ENCODE measurements at regions of chr4 and their contacts with region 1.

Region 1: GRCh38 chr4:41990365-41991111 is at the start of gene SLC30A9:
- DNase-seq: peak; percentile 95
- ATAC-seq: peak; percentile 97
- H3K4me3 Mint-ChIP-seq: peak within 1 kb of the TSS; percentile 93
- H3K27ac Mint-ChIP-seq: peak within 1 kb of the TSS; percentile 97
- H3K4me1 Mint-ChIP-seq: peaks cover 25% of the 10 kb centered on the region
- H3K27me3 Mint-ChIP-seq: no peaks in the 10 kb centered on the region
- total RNA-seq, gene SLC30A9: 55.8 to 59.6 TPM

Region 2: DNA sequence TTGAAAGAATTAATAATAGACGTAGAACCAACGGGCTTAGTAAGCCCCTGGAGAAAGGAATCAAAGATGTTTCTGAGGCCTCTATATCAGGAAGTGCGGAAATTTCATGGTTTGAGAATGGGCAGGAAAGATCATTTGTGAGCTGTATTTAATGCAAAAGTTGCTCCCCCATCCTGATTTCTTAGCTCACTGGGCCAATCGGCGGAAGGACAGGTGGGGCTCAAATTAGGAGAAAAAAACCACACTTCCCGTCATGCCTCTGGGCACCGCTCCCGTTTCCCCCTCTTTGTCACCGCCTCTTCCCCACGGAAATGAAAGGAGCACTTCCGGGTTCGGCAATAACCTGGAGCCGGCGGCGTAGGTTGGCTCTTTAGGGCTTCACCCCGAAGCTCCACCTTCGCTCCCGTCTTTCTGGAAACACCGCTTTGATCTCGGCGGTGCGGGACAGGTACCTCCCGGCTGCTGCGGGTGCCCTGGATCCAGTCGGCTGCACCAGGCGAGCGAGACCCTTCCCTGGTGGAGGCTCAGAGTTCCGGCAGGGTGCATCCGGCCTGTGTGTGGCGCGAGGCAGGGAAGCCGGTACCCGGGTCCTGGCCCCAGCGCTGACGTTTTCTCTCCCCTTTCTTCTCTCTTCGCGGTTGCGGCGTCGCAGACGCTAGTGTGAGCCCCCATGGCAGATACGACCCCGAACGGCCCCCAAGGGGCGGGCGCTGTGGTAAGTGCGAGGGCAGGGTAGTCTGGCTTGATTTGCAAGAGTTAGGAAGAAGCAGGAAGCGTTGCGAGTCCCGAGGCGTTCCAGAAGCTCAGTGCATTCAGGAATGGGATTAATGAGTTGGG is 55.5 kb before region 1 on chr4 and contains the start of gene TMEM33:
- CTCF ChIA-PET with region 1: no interaction called
- POLR2A ChIA-PET with region 1: interaction called, 4 read pairs
- intact Hi-C with region 1: loop called (anchors 1 kb)
- DNase-seq: peak; percentile 85
- ATAC-seq: peak; percentile 86
- H3K4me3 Mint-ChIP-seq: peak within 1 kb of the TSS; percentile 97
- H3K27ac Mint-ChIP-seq: peak within 1 kb of the TSS; percentile 92
- H3K4me1 Mint-ChIP-seq: peaks cover 36% of the 10 kb centered on the region
- H3K27me3 Mint-ChIP-seq: no peaks in the 10 kb centered on the region
- total RNA-seq, gene TMEM33: 43.8 to 57.2 TPM

Measured in activated CD4-positive, alpha-beta T cell treated with anti-CD3 and anti-CD28 coated beads for 36 hours (primary cell).